ENCODE measurements at regions of chr22 and their contacts with region 1.

Region 1: GRCh38 chr22:32058656-32059260 is 15.7 kb downstream of the SLC5A1 start:
- DNase-seq: no peak
- ATAC-seq: no peak
- H3K4me3 ChIP-seq: no peak overlapping the region
- H3K27ac ChIP-seq: no peak overlapping the region
- H3K4me1 ChIP-seq: no peaks in the 10 kb centered on the region
- H3K27me3 ChIP-seq: peaks cover 9% of the 10 kb centered on the region
- CTCF ChIP-seq: no peak
- POLR2A ChIP-seq: no peak
- RAD21 ChIP-seq: no peak

Region 2: DNA sequence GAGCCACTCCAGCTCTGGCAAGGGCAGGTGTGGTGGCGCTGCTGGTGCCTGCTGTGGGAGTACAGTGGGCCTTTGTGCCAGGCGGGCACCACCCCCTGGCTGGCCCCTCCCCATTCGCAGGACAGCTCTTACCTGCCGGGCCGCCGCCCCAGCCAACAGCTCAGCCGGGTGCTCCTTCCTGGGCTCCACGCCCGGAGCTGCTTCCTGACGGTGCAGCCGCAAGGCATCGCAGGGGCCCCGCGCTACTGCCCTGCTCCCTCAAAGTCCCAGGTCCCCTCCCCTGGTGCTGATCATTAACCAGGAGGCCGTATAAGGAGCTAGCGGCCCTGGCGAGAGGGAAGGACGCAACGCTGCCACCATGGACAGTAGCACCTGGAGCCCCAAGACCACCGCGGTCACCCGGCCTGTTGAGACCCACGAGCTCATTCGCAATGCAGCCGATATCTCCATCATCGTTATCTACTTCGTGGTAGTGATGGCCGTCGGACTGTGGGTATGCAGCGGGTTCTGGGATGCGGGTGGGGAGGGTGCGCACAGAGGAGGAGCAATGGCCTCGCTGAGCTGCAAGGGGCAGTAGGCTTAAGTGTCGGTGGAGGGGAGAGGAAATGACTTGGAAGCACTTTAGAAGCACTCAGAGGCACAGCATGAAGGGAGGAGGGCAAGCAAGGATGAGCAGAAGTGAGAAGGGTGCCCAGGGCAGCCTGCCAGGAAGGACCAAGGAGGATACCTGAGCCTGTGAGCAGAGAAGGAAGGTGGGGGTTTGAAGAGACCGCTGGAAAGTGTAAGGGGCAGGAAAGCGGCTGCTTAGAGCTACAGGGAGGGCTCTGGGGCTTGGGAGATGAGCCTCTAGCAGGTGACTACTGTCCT is 15.6 kb before region 1 on chr22 and contains the start of gene SLC5A1:
- CTCF ChIA-PET with region 1: no interaction called
- POLR2A ChIA-PET with region 1: no interaction called
- dilution Hi-C with region 1: no loop called
- in situ Hi-C with region 1: no loop called
- intact Hi-C with region 1: no loop called
- DNase-seq: no peak
- ATAC-seq: no peak
- H3K4me3 ChIP-seq: no peak within 1 kb of the TSS
- H3K27ac ChIP-seq: no peak within 1 kb of the TSS
- H3K4me1 ChIP-seq: no peaks in the 10 kb centered on the region
- H3K27me3 ChIP-seq: peaks cover 20% of the 10 kb centered on the region
- CTCF ChIP-seq: no peak
- POLR2A ChIP-seq: no peak
- RAD21 ChIP-seq: no peak
- total RNA-seq, gene SLC5A1: not detected in 2 replicates

Region 3: DNA sequence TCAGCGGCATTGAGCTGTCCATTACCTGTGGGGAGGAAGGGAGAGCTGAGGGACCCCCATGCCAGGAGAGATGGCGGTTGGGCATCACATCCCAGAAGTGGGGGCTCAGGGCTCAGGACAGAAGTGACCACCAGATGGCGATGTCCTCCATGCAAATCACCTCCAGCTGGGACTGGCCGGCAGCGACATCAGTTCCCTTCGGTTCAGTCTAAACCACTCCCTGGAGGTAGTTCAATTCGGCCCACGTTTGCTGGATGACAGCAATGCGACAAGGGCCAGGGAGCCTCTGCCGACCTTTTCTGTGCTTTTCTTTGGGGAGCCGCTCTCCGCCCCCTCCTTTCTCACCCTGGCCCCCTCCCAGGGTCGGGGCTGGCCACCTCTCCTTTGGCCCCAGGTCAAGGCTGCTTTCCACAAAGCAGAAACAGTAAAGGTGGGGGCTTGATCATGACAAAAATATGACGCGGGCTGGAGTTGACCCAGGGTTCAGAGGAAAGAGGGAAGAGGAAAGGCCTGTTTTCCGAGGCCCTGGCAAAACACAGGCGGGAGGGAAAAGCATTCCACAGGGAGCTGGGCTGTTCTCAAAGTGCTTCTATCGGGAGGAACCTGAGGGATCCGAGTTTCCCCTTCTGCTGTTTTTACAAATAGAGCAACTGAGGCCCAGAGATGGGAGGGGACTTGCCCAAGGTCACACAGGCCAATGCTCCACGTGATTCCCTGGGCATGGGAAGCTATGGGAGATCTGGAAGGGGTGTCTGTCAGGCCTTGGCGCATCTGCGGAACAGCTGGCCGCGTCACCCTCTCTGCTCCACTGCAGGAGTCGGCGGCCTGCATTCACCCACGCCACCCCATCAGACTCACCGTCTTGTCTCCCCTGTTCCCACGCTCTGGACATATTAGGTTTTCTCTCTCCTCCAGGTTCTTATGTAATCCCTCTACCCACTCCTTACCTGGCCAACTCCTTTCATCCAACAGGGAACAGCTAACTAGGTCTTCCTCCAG is 470.5 kb after region 1 on chr22:
- CTCF ChIA-PET with region 1: no interaction called
- POLR2A ChIA-PET with region 1: no interaction called
- dilution Hi-C with region 1: no loop called
- in situ Hi-C with region 1: no loop called
- intact Hi-C with region 1: no loop called
- DNase-seq: peak; percentile 86
- ATAC-seq: peak; percentile 78
- H3K4me3 ChIP-seq: no peak overlapping the region
- H3K27ac ChIP-seq: peak overlapping the region; percentile 1; the same call in 1 of the 2 replicates
- H3K4me1 ChIP-seq: peaks cover 23% of the 10 kb centered on the region
- H3K27me3 ChIP-seq: no peaks in the 10 kb centered on the region
- CTCF ChIP-seq: peak; percentile 95
- POLR2A ChIP-seq: peak; percentile 67
- RAD21 ChIP-seq: peak; percentile 100

Region 4: DNA sequence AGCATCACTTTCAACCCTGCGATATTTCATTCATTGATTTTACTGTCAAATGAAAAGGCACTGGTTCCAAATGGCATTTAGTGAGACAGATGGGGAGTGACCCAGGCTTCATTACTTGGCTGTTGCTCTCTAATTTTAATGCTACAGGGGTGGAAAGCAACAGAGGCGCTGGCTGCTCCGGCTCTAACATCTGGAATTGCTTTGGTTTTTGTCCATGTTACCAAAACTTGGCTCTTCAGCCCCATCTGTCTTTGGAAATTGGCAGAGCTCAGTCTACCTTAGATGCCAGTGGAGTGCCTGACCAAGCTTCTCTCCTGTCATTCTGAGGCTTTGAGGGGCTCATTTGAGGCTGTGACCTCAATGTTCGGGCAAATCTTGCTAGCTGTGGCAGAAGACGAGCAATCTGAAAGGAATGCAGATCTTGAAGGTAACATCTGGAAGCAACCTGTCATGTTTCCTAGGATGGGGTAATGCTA is 1408.9 kb after region 1 on chr22:
- CTCF ChIA-PET with region 1: no interaction called
- POLR2A ChIA-PET with region 1: no interaction called
- dilution Hi-C with region 1: no loop called
- in situ Hi-C with region 1: no loop called
- intact Hi-C with region 1: loop called (anchors 5 kb)
- DNase-seq: no peak
- ATAC-seq: no peak
- H3K4me3 ChIP-seq: no peak overlapping the region
- H3K27ac ChIP-seq: no peak overlapping the region
- H3K4me1 ChIP-seq: no peaks in the 10 kb centered on the region
- H3K27me3 ChIP-seq: no peaks in the 10 kb centered on the region
- CTCF ChIP-seq: 0 out of 2 replicates have a peak, but pooled peaks have one; percentile 10
- POLR2A ChIP-seq: no peak
- RAD21 ChIP-seq: no peak